Caco-2 (cell line): ENCODE measurements at regions of chr9 and their contacts with region 1.

Region 1: GRCh38 chr9:35079426-35080341 is at the start of gene FANCG:
- DNase-seq: peak; percentile 92 to 93
- H3K4me3 ChIP-seq: peak within 1 kb of the TSS; percentile 88
- H3K4me3 Mint-ChIP-seq: peak within 1 kb of the TSS; percentile 86
- H3K27ac Mint-ChIP-seq: peak within 1 kb of the TSS; percentile 87
- H3K4me1 ChIP-seq: peaks cover 10% of the 10 kb centered on the region; the same call in 1 of the 2 replicates
- H3K4me1 Mint-ChIP-seq: peaks cover 7% of the 10 kb centered on the region
- H3K27me3 ChIP-seq: no peaks in the 10 kb centered on the region
- H3K27me3 Mint-ChIP-seq: no peaks in the 10 kb centered on the region
- CTCF ChIP-seq: no peak
- total RNA-seq, gene FANCG: 68.9 and 74.8 TPM in 2 replicates

Region 2: GRCh38 chr9:35096035-35096849 is 16.6 kb after region 1 on chr9 and contains the start of gene PIGO:
- CTCF ChIA-PET with region 1: interaction called, 7 read pairs
- POLR2A ChIA-PET with region 1: no interaction called
- intact Hi-C with region 1: loop called (anchors 1 kb)
- DNase-seq: peak; percentile 93 to 96
- H3K4me3 ChIP-seq: peak within 1 kb of the TSS; percentile 83
- H3K4me3 Mint-ChIP-seq: peak within 1 kb of the TSS; percentile 85
- H3K27ac Mint-ChIP-seq: peak within 1 kb of the TSS; percentile 92
- H3K4me1 ChIP-seq: peaks cover 4% of the 10 kb centered on the region; the same call in 1 of the 2 replicates
- H3K4me1 Mint-ChIP-seq: no peaks in the 10 kb centered on the region
- H3K27me3 ChIP-seq: no peaks in the 10 kb centered on the region
- H3K27me3 Mint-ChIP-seq: no peaks in the 10 kb centered on the region
- CTCF ChIP-seq: peak; percentile 72 to 94
- total RNA-seq, gene PIGO: 38.7 and 41.5 TPM in 2 replicates

Region 3: DNA sequence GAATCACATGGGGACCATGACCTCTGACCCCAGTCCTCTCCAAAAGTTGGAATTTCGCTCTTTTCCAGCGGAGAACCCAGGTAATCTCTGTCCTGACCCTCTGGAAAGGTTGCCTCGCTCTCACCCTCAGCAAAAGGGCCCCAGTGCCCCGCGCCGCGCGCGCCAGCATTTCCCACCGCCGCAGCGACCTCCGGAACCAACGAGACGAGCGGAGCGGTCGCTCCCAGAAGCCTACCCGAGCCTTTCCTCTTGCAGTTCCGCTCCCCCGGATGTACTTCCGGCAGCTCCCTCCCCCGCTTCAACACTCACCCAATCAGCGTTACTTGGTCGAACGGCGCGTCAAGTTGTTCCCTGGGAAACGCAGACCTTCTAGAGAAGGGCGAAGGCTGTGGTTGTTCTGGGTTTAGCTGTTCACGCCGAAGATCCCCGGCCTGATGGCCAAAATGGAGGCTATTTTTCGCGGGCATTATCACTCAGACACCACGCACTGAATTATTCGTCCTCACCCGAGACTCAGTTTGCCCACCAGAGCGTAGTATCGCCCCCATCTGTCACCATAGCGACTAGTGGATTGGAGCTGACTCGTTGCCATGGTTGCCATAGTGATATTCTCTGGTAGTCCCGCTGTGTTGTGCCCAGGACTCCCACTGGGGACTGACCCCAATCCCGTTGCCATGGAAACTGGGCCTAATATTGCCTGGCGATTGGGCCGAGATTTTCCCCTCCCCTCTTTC is 23.4 kb after region 1 on chr9 and contains the start of gene STOML2:
- CTCF ChIA-PET with region 1: interaction called, 7 read pairs
- POLR2A ChIA-PET with region 1: interaction called, 14 read pairs
- intact Hi-C with region 1: no loop called
- DNase-seq: peak; percentile 93 to 95
- H3K4me3 ChIP-seq: peak within 1 kb of the TSS; percentile 78
- H3K4me3 Mint-ChIP-seq: peak within 1 kb of the TSS; percentile 99
- H3K27ac Mint-ChIP-seq: peak within 1 kb of the TSS; percentile 99
- H3K4me1 ChIP-seq: no peaks in the 10 kb centered on the region; the same call in 1 of the 2 replicates
- H3K4me1 Mint-ChIP-seq: no peaks in the 10 kb centered on the region
- H3K27me3 ChIP-seq: no peaks in the 10 kb centered on the region
- H3K27me3 Mint-ChIP-seq: no peaks in the 10 kb centered on the region
- CTCF ChIP-seq: no peak
- total RNA-seq, gene STOML2: 235 and 239 TPM in 2 replicates